ENCODE measurements at regions of chr6 and their contacts with region 1.

Region 1: GRCh38 chr6:125888989-125889656 is 67.4 kb upstream of the HINT3 start:
- DNase-seq: peak; percentile 77
- H3K4me3 Mint-ChIP-seq: no peak overlapping the region
- H3K27ac Mint-ChIP-seq: peak overlapping the region; percentile 75
- H3K4me1 Mint-ChIP-seq: peaks cover 7% of the 10 kb centered on the region
- H3K27me3 Mint-ChIP-seq: no peaks in the 10 kb centered on the region
- CTCF ChIP-seq: peak; percentile 35

Region 2: DNA sequence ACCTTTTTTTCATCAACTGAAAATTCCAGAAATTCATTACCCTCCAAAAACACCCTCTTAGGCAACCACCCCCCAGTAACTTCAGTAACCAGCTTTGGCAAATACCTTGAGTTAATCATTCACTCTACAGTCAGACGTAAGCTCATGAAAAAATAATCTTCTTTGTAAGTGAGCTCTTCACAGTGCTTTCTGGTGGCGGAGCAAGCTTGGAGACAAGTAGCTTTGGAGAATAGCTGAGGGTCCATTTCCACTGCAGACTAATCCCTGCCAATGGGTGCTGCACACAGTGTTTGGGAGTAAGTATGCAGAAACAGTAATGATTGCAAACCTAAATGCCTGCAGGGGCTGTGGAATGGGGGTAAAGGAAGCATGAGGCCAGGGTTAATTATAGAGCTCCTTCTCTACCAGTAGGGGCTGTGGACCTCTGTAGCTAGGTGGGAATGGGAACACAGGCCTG is 10.6 kb after region 1 on chr6:
- CTCF ChIA-PET with region 1: interaction called, 27 read pairs
- POLR2A ChIA-PET with region 1: interaction called, 4 read pairs
- intact Hi-C with region 1: no loop called
- DNase-seq: no peak
- H3K4me3 Mint-ChIP-seq: no peak overlapping the region
- H3K27ac Mint-ChIP-seq: no peak overlapping the region
- H3K4me1 Mint-ChIP-seq: peaks cover 10% of the 10 kb centered on the region
- H3K27me3 Mint-ChIP-seq: no peaks in the 10 kb centered on the region
- CTCF ChIP-seq: no peak

Region 3: GRCh38 chr6:125906158-125906998 is 17.3 kb after region 1 on chr6:
- CTCF ChIA-PET with region 1: interaction called, 27 read pairs
- POLR2A ChIA-PET with region 1: interaction called, 4 read pairs
- intact Hi-C with region 1: no loop called
- DNase-seq: peak; percentile 69
- H3K4me3 Mint-ChIP-seq: no peak overlapping the region
- H3K27ac Mint-ChIP-seq: peak overlapping the region; percentile 24
- H3K4me1 Mint-ChIP-seq: peaks cover 41% of the 10 kb centered on the region
- H3K27me3 Mint-ChIP-seq: no peaks in the 10 kb centered on the region
- CTCF ChIP-seq: peak; percentile 59

Region 4: DNA sequence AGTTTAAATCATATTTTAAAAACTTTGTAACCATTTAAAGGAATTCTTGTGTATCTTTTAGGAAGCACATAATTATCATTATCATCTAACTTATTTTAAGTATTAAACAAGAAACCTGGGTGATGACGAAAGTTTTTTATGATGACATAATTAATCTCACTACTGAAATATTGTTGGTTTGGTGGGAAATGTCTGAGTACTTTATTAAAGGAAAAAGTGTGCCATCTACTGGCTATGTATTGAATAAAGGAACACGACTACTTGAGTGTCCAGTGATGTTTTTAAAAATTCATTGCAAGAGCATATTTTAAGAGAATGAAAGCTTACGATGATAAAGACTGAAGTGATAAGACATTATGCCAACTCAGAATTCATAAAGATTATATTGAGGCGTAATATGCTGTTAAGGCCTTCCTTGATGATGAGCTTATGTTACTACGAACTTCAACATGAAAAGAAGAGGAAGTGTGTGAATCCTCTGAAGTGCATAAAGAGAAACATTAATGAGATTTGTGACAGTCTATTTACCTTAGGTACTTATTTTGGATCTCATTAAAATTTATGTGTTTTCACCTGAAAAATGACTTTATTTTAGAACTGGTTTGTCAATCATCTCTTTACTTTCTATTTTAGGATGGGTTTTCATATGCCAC is 85.2 kb after region 1 on chr6:
- CTCF ChIA-PET with region 1: interaction called, 9 read pairs
- POLR2A ChIA-PET with region 1: no interaction called
- intact Hi-C with region 1: loop called (anchors 1 kb)
- DNase-seq: peak; percentile 66
- H3K4me3 Mint-ChIP-seq: no peak overlapping the region
- H3K27ac Mint-ChIP-seq: no peak overlapping the region
- H3K4me1 Mint-ChIP-seq: peaks cover 5% of the 10 kb centered on the region
- H3K27me3 Mint-ChIP-seq: no peaks in the 10 kb centered on the region
- CTCF ChIP-seq: peak; percentile 44

Region 5: DNA sequence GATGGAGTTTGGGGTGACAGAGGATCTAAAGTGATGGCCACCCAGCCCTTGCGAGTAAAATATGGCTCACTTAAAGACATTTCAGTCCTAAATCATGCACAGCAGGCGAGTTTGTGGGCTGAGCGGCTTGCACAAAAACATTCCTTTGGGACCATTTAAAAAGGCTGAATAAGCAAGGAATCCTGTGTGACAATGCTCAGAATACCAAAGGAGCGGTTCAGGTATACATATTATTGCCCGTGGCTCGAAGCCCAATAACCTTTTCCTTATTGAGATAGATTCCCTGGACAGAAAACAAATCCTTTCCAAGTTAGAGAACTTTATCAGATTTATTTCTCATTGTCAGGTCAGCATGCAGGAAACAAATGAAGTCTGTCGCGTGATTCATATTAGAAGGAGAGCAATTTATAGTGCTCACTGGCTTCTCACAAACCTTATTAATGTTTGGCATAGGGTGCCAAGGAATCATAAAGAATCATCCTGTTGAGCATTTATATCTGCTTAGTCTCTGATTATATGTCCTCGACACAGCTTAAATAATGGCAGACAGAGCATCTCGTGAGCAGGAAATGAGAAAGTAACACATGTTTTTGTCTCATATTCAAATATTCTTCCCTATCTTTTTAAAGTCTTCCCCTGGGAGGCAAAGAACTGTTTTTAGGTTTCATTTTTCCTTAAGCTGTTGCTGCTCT is 218.5 kb after region 1 on chr6:
- CTCF ChIA-PET with region 1: no interaction called
- POLR2A ChIA-PET with region 1: no interaction called
- intact Hi-C with region 1: no loop called
- DNase-seq: no peak
- H3K4me3 Mint-ChIP-seq: no peak overlapping the region
- H3K27ac Mint-ChIP-seq: no peak overlapping the region
- H3K4me1 Mint-ChIP-seq: no peaks in the 10 kb centered on the region
- H3K27me3 Mint-ChIP-seq: no peaks in the 10 kb centered on the region
- CTCF ChIP-seq: no peak

Measured in MCF 10A (cell line).